Activated CD4-positive, alpha-beta memory T cell treated with anti-CD3 and anti-CD28 coated beads for 36 hours (primary cell): ENCODE measurements at regions of chr3 and their contacts with region 1.

Region 1: DNA sequence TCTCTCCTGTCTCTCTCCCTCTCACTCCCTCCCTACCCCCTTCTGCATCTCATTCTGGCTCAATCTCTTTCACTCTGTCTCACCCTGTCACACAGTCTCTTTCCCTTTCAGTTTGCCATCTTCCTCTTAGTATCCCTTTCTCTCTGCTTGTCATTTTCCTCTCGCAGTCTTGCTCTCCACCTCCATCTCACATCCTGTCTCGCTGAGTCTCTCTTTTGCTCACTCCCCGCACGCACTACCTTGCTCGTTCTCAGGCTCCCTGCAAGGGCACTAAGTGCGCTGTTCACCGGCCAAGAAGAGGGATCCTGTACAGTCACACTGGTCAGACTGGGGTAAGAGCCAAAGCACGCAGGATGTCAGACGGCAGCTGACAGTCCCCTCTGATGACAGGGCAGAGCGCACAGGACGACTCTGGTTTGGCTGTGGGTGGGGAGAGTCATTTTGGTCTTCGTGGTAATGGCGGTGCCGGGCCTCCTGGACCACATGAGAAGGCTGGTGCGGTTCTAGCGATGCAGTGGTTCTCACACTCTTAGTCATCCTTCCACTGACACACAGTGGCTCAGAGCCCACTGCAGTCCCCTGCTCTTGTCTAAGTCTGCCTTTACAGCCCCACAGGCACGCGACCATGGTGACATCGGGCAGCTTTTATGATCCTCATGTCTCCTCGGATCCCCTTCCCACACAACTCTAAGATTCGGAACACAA is 356.8 kb downstream of the FOXP1 start:
- DNase-seq: peak; percentile 96
- H3K4me3 Mint-ChIP-seq: peak overlapping the region; percentile 77
- H3K27ac Mint-ChIP-seq: peak overlapping the region; percentile 96
- H3K4me1 Mint-ChIP-seq: peaks cover 77% of the 10 kb centered on the region
- H3K27me3 Mint-ChIP-seq: no peaks in the 10 kb centered on the region

Region 2: GRCh38 chr3:70933105-70933810 is 293.5 kb before region 1 on chr3:
- CTCF ChIA-PET with region 1: no interaction called
- POLR2A ChIA-PET with region 1: no interaction called
- intact Hi-C with region 1: no loop called
- DNase-seq: no peak
- H3K4me3 Mint-ChIP-seq: no peak overlapping the region
- H3K27ac Mint-ChIP-seq: no peak overlapping the region
- H3K4me1 Mint-ChIP-seq: peaks cover 6% of the 10 kb centered on the region
- H3K27me3 Mint-ChIP-seq: no peaks in the 10 kb centered on the region

Region 3: GRCh38 chr3:71010726-71011455 is 215.8 kb before region 1 on chr3:
- CTCF ChIA-PET with region 1: interaction called, 3 read pairs
- POLR2A ChIA-PET with region 1: no interaction called
- intact Hi-C with region 1: loop called (anchors 1 kb)
- DNase-seq: peak; percentile 87
- H3K4me3 Mint-ChIP-seq: peak overlapping the region; percentile 56
- H3K27ac Mint-ChIP-seq: peak overlapping the region; percentile 92
- H3K4me1 Mint-ChIP-seq: peaks cover 68% of the 10 kb centered on the region
- H3K27me3 Mint-ChIP-seq: no peaks in the 10 kb centered on the region

Region 4: GRCh38 chr3:71087143-71088018 is 139.3 kb before region 1 on chr3:
- CTCF ChIA-PET with region 1: no interaction called
- POLR2A ChIA-PET with region 1: interaction called, 13 read pairs
- intact Hi-C with region 1: loop called (anchors 1 kb)
- DNase-seq: peak; percentile 62
- H3K4me3 Mint-ChIP-seq: peak overlapping the region; percentile 38
- H3K27ac Mint-ChIP-seq: peak overlapping the region; percentile 81
- H3K4me1 Mint-ChIP-seq: peaks cover 88% of the 10 kb centered on the region
- H3K27me3 Mint-ChIP-seq: no peaks in the 10 kb centered on the region

Region 5: GRCh38 chr3:71135373-71136088 is 91.2 kb before region 1 on chr3:
- CTCF ChIA-PET with region 1: no interaction called
- POLR2A ChIA-PET with region 1: no interaction called
- intact Hi-C with region 1: no loop called
- DNase-seq: no peak
- H3K4me3 Mint-ChIP-seq: no peak overlapping the region
- H3K27ac Mint-ChIP-seq: no peak overlapping the region
- H3K4me1 Mint-ChIP-seq: peaks cover 60% of the 10 kb centered on the region
- H3K27me3 Mint-ChIP-seq: no peaks in the 10 kb centered on the region

Region 6: DNA sequence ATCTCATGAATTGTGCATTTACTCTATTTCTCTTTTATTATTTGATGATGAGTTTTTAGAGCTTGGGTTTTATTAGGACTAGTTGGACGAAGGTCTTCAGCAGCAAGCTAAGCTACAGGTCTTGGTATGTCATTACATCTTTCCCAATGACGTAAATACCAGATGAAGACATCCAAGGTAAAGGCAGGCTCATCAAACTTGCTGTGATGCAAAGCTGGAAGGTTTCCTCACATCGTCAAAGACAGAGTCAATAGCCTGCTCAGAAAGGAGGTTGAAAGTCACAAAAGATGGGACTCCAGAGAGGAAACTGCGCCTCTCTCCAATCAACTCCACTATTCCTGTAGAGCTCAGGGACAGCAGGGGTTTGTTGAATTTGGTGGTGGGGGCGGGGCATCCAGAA is 29.2 kb after region 1 on chr3:
- CTCF ChIA-PET with region 1: no interaction called
- POLR2A ChIA-PET with region 1: no interaction called
- intact Hi-C with region 1: loop called (anchors 2 kb)
- DNase-seq: no peak
- H3K4me3 Mint-ChIP-seq: no peak overlapping the region
- H3K27ac Mint-ChIP-seq: no peak overlapping the region
- H3K4me1 Mint-ChIP-seq: peaks cover 49% of the 10 kb centered on the region
- H3K27me3 Mint-ChIP-seq: no peaks in the 10 kb centered on the region

Region 7: GRCh38 chr3:71380096-71380495 is 153.4 kb after region 1 on chr3:
- CTCF ChIA-PET with region 1: no interaction called
- POLR2A ChIA-PET with region 1: interaction called, 4 read pairs
- intact Hi-C with region 1: loop called (anchors 2 kb)
- DNase-seq: no peak
- H3K4me3 Mint-ChIP-seq: no peak overlapping the region
- H3K27ac Mint-ChIP-seq: peak overlapping the region; percentile 85
- H3K4me1 Mint-ChIP-seq: peaks cover 82% of the 10 kb centered on the region
- H3K27me3 Mint-ChIP-seq: no peaks in the 10 kb centered on the region

Region 8: GRCh38 chr3:71583566-71584449 is 357.1 kb after region 1 on chr3 and contains the start of gene FOXP1:
- CTCF ChIA-PET with region 1: interaction called, 3 read pairs
- POLR2A ChIA-PET with region 1: interaction called, 7 read pairs
- intact Hi-C with region 1: loop called (anchors 1 kb)
- DNase-seq: peak; percentile 75
- H3K4me3 Mint-ChIP-seq: peak within 1 kb of the TSS; percentile 88
- H3K27ac Mint-ChIP-seq: peak within 1 kb of the TSS; percentile 91
- H3K4me1 Mint-ChIP-seq: peaks cover 56% of the 10 kb centered on the region
- H3K27me3 Mint-ChIP-seq: peaks cover 1% of the 10 kb centered on the region
- total RNA-seq, gene FOXP1: 94.4 to 102 TPM